Activated CD4-positive, alpha-beta memory T cell treated with anti-CD3 and anti-CD28 coated beads for 36 hours (primary cell): ENCODE measurements at regions of chr14 and their contacts with region 1.

Region 1: GRCh38 chr14:51239813-51240803 is at the start of gene TMX1:
- DNase-seq: peak; percentile 94
- H3K4me3 Mint-ChIP-seq: no peak within 1 kb of the TSS
- H3K27ac Mint-ChIP-seq: no peak within 1 kb of the TSS
- H3K4me1 Mint-ChIP-seq: peaks cover 37% of the 10 kb centered on the region
- H3K27me3 Mint-ChIP-seq: no peaks in the 10 kb centered on the region
- total RNA-seq, gene TMX1: 57.1 to 58.1 TPM

Region 2: GRCh38 chr14:50830932-50831725 is 409.0 kb before region 1 on chr14 and contains the start of gene NIN:
- CTCF ChIA-PET with region 1: no interaction called
- POLR2A ChIA-PET with region 1: no interaction called
- intact Hi-C with region 1: loop called (anchors 5 kb)
- DNase-seq: peak; percentile 77
- H3K4me3 Mint-ChIP-seq: peak within 1 kb of the TSS; percentile 92
- H3K27ac Mint-ChIP-seq: peak within 1 kb of the TSS; percentile 86
- H3K4me1 Mint-ChIP-seq: peaks cover 54% of the 10 kb centered on the region
- H3K27me3 Mint-ChIP-seq: peaks cover 6% of the 10 kb centered on the region
- total RNA-seq, gene NIN: 44.7 to 44.8 TPM

Region 3: DNA sequence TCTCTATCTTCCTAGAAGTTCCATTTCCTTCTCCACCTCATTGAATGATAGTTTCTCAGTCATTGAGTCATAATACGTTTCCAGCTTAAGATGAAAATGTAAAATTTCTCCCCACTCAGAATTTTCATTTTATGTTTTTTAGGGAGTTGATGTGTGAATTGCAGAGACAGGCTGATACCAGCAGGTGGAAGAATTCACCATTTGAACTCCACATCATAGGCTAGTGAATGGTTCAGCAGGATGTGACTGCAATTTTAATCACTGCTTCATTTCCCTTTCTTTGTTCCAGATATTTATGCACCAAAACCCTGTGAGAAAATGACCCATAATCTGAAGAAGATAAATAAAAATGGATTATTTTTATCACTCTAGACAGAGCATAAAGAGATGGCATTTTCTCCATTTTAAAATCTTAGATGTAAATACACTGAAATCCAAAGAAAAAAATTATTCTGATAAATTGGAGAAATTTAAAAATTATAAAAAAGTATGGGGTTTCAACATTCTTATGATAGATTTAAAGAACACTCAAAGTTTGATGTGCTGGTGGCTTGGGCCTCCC is 285.2 kb before region 1 on chr14:
- CTCF ChIA-PET with region 1: no interaction called
- POLR2A ChIA-PET with region 1: no interaction called
- intact Hi-C with region 1: loop called (anchors 10 kb)
- DNase-seq: no peak
- H3K4me3 Mint-ChIP-seq: no peak overlapping the region
- H3K27ac Mint-ChIP-seq: no peak overlapping the region
- H3K4me1 Mint-ChIP-seq: peaks cover 11% of the 10 kb centered on the region
- H3K27me3 Mint-ChIP-seq: no peaks in the 10 kb centered on the region

Region 4: GRCh38 chr14:51094901-51095853 is 144.9 kb before region 1 on chr14 and contains the start of gene TRIM9:
- CTCF ChIA-PET with region 1: no interaction called
- POLR2A ChIA-PET with region 1: interaction called, 3 read pairs
- intact Hi-C with region 1: loop called (anchors 1 kb)
- DNase-seq: peak; percentile 95
- H3K4me3 Mint-ChIP-seq: peak within 1 kb of the TSS; percentile 81
- H3K27ac Mint-ChIP-seq: peak within 1 kb of the TSS; percentile 33
- H3K4me1 Mint-ChIP-seq: peaks cover 10% of the 10 kb centered on the region
- H3K27me3 Mint-ChIP-seq: peaks cover 22% of the 10 kb centered on the region
- total RNA-seq, gene TRIM9: 0.36 to 0.40 TPM

Region 5: DNA sequence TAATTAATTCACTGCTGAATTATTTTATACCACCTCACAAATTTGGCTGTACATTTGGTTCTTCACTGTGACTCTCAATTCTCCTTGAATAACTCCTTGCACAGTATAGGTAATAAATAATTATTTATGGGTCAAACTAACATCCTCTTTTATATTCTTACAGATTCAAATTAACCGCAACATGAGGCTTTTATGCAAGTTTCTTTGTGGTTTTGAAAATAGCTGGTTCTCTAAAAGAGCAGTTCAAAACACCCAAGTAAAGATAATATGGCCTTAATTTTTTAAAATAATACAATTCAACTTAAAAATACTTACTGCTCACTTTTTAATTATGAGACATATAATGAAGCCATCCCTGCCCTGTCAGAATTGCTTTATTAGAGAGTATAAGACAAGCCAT is 132.3 kb before region 1 on chr14:
- CTCF ChIA-PET with region 1: no interaction called
- POLR2A ChIA-PET with region 1: no interaction called
- intact Hi-C with region 1: no loop called
- DNase-seq: no peak
- H3K4me3 Mint-ChIP-seq: no peak overlapping the region
- H3K27ac Mint-ChIP-seq: no peak overlapping the region
- H3K4me1 Mint-ChIP-seq: no peaks in the 10 kb centered on the region
- H3K27me3 Mint-ChIP-seq: peaks cover 10% of the 10 kb centered on the region

Region 6: DNA sequence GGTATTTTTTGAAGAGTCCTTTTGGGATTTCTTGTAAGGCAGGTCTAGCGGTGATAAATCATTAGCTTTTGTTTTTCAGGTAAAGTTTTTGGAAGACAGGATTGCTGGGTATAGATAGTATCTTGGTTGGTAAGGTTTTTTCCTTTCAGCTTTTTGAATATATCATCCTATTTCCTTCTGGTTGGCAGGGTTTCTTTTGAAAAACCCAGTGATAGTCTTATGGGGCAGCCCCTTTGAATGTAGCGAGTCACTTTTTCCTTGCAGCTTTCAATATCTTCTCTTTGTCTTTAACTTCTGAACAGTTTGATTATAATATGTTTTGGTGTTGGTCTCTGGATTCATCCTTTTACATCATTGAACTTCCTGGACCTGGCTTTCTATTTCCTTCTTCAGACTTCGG is 20.1 kb after region 1 on chr14:
- CTCF ChIA-PET with region 1: no interaction called
- POLR2A ChIA-PET with region 1: no interaction called
- intact Hi-C with region 1: loop called (anchors 2 kb)
- DNase-seq: no peak
- H3K4me3 Mint-ChIP-seq: no peak overlapping the region
- H3K27ac Mint-ChIP-seq: peak overlapping the region; percentile 55
- H3K4me1 Mint-ChIP-seq: peaks cover 18% of the 10 kb centered on the region
- H3K27me3 Mint-ChIP-seq: no peaks in the 10 kb centered on the region

Region 7: DNA sequence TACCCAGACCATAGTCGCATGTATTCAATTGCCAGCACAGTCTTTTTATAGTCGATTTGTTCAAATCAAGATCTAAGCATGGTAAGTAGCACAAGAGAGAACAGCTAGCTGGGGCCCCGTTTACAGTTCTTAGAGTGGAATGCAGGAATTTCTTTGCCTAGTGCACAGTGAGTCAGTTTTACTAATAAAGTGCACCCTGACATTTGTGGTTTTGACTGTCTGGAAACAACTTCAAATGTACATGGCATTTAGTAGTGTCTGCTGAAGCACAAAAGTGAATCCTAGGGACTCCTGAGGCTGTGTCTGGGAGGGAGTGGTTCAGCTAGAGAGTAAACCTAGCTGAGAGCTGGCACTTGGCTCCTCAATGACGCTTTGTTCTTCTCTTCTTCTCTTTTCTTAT is 64.8 kb after region 1 on chr14:
- CTCF ChIA-PET with region 1: no interaction called
- POLR2A ChIA-PET with region 1: no interaction called
- intact Hi-C with region 1: loop called (anchors 2 kb)
- DNase-seq: no peak
- H3K4me3 Mint-ChIP-seq: no peak overlapping the region
- H3K27ac Mint-ChIP-seq: no peak overlapping the region
- H3K4me1 Mint-ChIP-seq: peaks cover 12% of the 10 kb centered on the region
- H3K27me3 Mint-ChIP-seq: peaks cover 3% of the 10 kb centered on the region

Region 8: DNA sequence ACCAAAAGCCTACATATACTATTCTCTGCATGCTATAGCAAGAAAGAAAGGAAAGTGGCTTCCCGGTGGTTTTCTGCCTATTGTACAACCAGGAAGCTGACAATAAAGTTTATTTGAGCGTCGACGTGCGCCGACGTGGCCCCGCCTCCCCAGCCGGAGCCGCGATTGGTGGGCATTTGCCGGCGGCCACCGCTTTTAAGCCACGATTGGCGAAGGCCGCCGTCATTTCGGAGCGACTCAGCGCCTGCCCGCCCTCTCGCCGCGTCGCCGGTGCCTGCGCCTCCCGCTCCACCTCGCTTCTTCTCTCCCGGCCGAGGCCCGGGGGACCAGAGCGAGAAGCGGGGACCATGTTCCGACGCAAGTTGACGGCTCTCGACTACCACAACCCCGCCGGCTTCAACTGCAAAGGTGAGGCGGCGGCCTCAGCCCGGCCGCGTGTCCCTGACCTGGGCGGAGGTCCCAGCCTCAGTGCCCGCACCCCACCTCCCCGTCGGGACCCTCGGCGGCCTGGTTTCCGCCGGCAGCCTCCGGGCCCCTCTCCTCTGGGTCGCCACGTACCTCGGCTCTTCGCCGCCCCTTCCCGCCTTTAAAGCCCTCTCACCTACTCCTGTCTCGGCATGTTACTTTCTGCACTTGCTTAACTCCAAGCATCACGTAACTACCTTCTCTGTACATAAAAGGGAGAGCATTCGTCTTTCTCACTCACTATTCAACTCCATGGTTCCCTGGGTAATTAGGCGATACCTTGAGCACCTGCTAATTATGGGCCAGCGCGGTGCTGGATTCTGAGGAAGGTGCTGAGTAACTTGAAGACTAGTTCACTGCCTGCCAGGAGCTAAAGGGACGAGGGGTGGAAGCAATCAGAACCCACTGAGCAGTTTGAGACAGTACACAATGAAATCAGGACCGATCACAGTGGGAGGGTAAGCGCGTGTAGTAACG is 749.5 kb after region 1 on chr14 and contains the start of gene RTRAF:
- CTCF ChIA-PET with region 1: no interaction called
- POLR2A ChIA-PET with region 1: no interaction called
- intact Hi-C with region 1: loop called (anchors 5 kb)
- DNase-seq: peak; percentile 94
- H3K4me3 Mint-ChIP-seq: peak within 1 kb of the TSS; percentile 89
- H3K27ac Mint-ChIP-seq: peak within 1 kb of the TSS; percentile 79
- H3K4me1 Mint-ChIP-seq: peaks cover 35% of the 10 kb centered on the region
- H3K27me3 Mint-ChIP-seq: no peaks in the 10 kb centered on the region
- total RNA-seq, gene RTRAF: 222 to 238 TPM